ENCODE measurements at regions of chr11 and their contacts with region 1.

Region 1: GRCh38 chr11:86999859-87000753 is 37.6 kb upstream of the TMEM135 start:
- DNase-seq: peak; percentile 98
- H3K4me3 ChIP-seq: no peak overlapping the region
- H3K4me3 Mint-ChIP-seq: peak overlapping the region; percentile 58
- H3K27ac Mint-ChIP-seq: peak overlapping the region; percentile 94
- H3K4me1 ChIP-seq: peaks cover 59% of the 10 kb centered on the region
- H3K4me1 Mint-ChIP-seq: peaks cover 72% of the 10 kb centered on the region
- H3K27me3 ChIP-seq: no peaks in the 10 kb centered on the region
- H3K27me3 Mint-ChIP-seq: no peaks in the 10 kb centered on the region
- CTCF ChIP-seq: no peak

Region 2: DNA sequence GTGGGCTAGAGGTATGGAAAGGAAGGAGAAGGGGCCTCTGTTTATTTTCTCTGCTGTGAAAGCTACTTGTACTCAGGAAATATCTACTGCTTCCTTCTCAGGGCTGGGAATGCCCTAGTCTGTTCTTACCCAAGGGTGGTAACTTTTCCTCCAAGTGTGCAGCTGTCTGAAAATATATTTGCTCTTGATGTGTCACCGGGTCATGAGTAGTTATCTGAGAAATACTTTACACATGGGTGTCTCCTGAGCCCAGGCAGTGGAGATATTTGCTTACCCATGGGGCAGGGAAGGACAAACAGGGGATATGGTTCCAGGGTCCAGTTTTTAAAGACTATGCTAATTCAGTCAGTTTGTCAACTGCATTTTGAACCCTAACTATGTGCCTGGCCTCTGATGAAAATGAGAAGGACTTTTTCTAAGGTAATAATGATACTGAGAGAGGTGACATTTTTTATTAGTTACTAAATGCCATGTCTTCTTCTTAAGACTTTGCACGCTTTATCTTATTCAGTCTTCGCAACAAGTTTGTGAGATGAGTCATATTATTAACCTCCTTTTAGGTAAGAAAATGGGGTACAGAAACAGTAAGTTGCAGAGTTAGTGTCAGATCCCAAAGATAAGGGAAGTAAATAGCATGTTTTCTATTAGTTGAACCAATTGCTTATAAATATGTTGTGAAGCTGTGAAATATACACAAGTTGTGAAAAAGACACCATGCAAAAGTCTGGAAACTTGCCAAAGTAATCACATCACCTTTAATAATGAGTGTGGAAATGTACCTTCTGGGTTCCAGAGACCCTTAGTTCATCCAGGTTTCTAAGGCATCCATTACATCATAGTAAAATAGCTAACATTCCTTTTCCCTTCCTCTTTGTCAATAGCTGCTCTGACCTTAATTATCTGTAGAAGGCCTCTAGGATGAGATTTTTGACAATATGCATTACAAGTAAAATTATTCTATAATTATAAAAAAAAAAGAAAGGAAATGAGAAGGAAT is 1212.0 kb before region 1 on chr11:
- CTCF ChIA-PET with region 1: no interaction called
- POLR2A ChIA-PET with region 1: no interaction called
- intact Hi-C with region 1: loop called (anchors 10 kb)
- DNase-seq: peak; percentile 79 to 91
- H3K4me3 ChIP-seq: no peak overlapping the region
- H3K4me3 Mint-ChIP-seq: peak overlapping the region; percentile 61
- H3K27ac Mint-ChIP-seq: peak overlapping the region; percentile 86
- H3K4me1 ChIP-seq: peaks cover 69% of the 10 kb centered on the region
- H3K4me1 Mint-ChIP-seq: peaks cover 62% of the 10 kb centered on the region
- H3K27me3 ChIP-seq: no peaks in the 10 kb centered on the region
- H3K27me3 Mint-ChIP-seq: no peaks in the 10 kb centered on the region
- CTCF ChIP-seq: no peak

Region 3: GRCh38 chr11:86795890-86796289 is 204.2 kb before region 1 on chr11:
- CTCF ChIA-PET with region 1: no interaction called
- POLR2A ChIA-PET with region 1: no interaction called
- intact Hi-C with region 1: no loop called
- DNase-seq: peak; percentile 77 to 81
- H3K4me3 ChIP-seq: no peak overlapping the region
- H3K4me3 Mint-ChIP-seq: peak overlapping the region; percentile 10
- H3K27ac Mint-ChIP-seq: peak overlapping the region; percentile 99
- H3K4me1 ChIP-seq: peaks cover 80% of the 10 kb centered on the region
- H3K4me1 Mint-ChIP-seq: peaks cover 69% of the 10 kb centered on the region
- H3K27me3 ChIP-seq: no peaks in the 10 kb centered on the region
- H3K27me3 Mint-ChIP-seq: no peaks in the 10 kb centered on the region
- CTCF ChIP-seq: no peak

Region 4: DNA sequence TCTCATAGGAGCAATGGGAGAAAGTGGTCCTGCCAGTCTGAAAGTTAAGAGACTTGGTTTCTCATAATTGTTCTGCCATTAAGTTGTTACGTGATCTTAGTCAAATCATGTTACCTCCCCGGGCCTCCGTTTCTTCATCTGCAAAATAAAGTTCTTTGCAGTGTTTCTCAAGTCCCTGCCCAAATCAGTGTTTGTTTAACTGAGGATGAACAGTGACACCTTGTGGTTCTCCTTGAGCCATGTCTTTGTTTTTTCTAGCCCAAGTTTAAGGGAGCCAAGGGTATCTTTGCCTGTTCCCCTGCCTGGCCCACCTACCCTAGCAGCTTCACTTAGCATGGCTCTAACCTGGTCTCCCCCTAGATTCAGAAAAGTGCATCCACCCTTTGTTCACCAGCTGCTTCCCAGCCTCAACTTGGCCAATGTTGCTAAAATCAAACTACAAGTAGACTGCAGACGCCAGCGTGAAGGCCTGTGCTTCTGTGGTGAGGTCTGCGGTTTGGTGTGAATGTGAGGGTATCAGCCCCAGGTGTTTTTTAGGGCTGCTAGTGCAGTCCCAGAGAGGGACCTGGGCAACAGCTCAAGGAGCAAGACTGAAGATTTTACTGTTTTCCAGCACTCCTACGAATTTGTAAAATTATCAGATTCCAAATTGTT is 80.4 kb before region 1 on chr11:
- CTCF ChIA-PET with region 1: no interaction called
- POLR2A ChIA-PET with region 1: no interaction called
- intact Hi-C with region 1: loop called (anchors 1 kb)
- DNase-seq: peak; percentile 60 to 77
- H3K4me3 ChIP-seq: no peak overlapping the region
- H3K4me3 Mint-ChIP-seq: no peak overlapping the region
- H3K27ac Mint-ChIP-seq: no peak overlapping the region
- H3K4me1 ChIP-seq: peaks cover 32% of the 10 kb centered on the region
- H3K4me1 Mint-ChIP-seq: peaks cover 30% of the 10 kb centered on the region
- H3K27me3 ChIP-seq: no peaks in the 10 kb centered on the region
- H3K27me3 Mint-ChIP-seq: no peaks in the 10 kb centered on the region
- CTCF ChIP-seq: peak; percentile 91 to 95

Region 5: GRCh38 chr11:86955361-86956120 is 44.6 kb before region 1 on chr11 and contains the start of gene FZD4:
- CTCF ChIA-PET with region 1: interaction called, 32 read pairs
- POLR2A ChIA-PET with region 1: interaction called, 15 read pairs
- intact Hi-C with region 1: loop called (anchors 1 kb)
- DNase-seq: peak; percentile 96 to 99
- H3K4me3 ChIP-seq: peak within 1 kb of the TSS; percentile 94
- H3K4me3 Mint-ChIP-seq: peak within 1 kb of the TSS; percentile 93
- H3K27ac Mint-ChIP-seq: peak within 1 kb of the TSS; percentile 90
- H3K4me1 ChIP-seq: peaks cover 15% of the 10 kb centered on the region
- H3K4me1 Mint-ChIP-seq: peaks cover 22% of the 10 kb centered on the region
- H3K27me3 ChIP-seq: no peaks in the 10 kb centered on the region
- H3K27me3 Mint-ChIP-seq: no peaks in the 10 kb centered on the region
- CTCF ChIP-seq: peak; percentile 5 to 64
- total RNA-seq, gene FZD4: 60.6 and 78.4 TPM in 2 replicates

Region 6: DNA sequence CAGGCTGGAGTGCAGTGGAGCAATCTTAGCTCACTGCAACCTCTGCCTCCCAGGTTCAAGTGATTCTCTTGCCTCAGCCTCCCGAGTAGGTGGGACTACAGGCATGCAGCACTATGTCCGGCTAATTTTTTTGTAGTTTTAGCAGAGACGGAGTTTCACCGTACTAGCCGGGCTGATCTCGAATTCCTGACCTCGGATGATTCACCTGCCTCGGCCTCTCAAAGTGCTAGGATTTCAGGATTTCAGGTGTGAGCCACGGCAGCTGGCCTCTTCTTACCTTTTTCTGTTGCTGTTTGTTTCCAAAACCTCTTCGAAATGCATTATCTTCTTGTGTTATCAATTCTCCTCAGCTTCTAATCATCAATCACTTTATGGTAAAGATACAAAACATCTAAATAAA is 15.5 kb after region 1 on chr11:
- CTCF ChIA-PET with region 1: interaction called, 3 read pairs
- POLR2A ChIA-PET with region 1: no interaction called
- intact Hi-C with region 1: loop called (anchors 1 kb)
- DNase-seq: no peak
- H3K4me3 ChIP-seq: no peak overlapping the region
- H3K4me3 Mint-ChIP-seq: no peak overlapping the region
- H3K27ac Mint-ChIP-seq: no peak overlapping the region
- H3K4me1 ChIP-seq: peaks cover 15% of the 10 kb centered on the region
- H3K4me1 Mint-ChIP-seq: peaks cover 27% of the 10 kb centered on the region
- H3K27me3 ChIP-seq: no peaks in the 10 kb centered on the region
- H3K27me3 Mint-ChIP-seq: no peaks in the 10 kb centered on the region
- CTCF ChIP-seq: no peak

Region 7: DNA sequence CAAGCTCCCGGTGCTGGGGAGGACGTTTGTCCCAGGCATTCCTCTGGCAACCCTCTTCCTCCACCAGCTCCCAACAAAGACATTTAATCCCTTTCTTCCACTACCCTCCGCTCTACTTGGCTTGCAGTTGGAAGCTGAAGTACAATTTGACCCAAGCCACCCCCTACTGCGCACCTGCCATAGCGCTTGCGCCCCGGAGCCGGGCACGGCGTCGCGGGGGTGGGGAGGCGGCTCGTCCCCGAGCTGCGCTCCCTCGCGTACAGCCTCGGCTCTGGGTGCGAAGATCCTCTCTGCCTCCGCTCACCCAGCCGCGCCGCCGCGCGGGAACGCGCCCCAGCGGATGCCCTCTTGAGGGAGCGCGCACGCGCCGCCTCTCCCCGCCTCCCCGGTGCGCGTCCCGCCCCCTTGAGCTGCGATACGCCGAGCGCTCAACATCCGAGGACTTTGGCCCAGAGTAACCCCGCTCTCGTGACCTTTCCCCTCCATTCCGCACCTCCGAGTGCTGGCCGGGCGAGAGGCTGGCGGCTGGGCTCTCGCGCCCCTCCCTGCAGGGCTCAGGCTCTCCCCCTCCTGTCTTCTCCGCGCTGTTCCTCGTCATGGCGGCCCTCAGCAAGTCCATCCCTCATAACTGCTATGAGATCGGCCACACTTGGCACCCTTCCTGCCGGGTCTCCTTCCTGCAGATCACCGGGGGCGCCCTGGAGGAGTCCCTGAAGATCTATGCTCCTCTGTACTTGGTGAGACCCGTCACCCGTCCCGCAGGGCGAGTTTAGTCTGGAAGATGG is 37.5 kb after region 1 on chr11 and contains the start of gene TMEM135:
- CTCF ChIA-PET with region 1: interaction called, 20 read pairs
- POLR2A ChIA-PET with region 1: interaction called, 33 read pairs
- intact Hi-C with region 1: loop called (anchors 2 kb)
- DNase-seq: peak; percentile 99 to 100
- H3K4me3 ChIP-seq: peak within 1 kb of the TSS; percentile 83
- H3K4me3 Mint-ChIP-seq: peak within 1 kb of the TSS; percentile 97
- H3K27ac Mint-ChIP-seq: peak within 1 kb of the TSS; percentile 81
- H3K4me1 ChIP-seq: peaks cover 11% of the 10 kb centered on the region
- H3K4me1 Mint-ChIP-seq: peaks cover 59% of the 10 kb centered on the region
- H3K27me3 ChIP-seq: no peaks in the 10 kb centered on the region
- H3K27me3 Mint-ChIP-seq: no peaks in the 10 kb centered on the region
- CTCF ChIP-seq: peak in 1 of 2 experiments; percentile 62
- total RNA-seq, gene TMEM135: 88.6 and 95.2 TPM in 2 replicates

Region 8: DNA sequence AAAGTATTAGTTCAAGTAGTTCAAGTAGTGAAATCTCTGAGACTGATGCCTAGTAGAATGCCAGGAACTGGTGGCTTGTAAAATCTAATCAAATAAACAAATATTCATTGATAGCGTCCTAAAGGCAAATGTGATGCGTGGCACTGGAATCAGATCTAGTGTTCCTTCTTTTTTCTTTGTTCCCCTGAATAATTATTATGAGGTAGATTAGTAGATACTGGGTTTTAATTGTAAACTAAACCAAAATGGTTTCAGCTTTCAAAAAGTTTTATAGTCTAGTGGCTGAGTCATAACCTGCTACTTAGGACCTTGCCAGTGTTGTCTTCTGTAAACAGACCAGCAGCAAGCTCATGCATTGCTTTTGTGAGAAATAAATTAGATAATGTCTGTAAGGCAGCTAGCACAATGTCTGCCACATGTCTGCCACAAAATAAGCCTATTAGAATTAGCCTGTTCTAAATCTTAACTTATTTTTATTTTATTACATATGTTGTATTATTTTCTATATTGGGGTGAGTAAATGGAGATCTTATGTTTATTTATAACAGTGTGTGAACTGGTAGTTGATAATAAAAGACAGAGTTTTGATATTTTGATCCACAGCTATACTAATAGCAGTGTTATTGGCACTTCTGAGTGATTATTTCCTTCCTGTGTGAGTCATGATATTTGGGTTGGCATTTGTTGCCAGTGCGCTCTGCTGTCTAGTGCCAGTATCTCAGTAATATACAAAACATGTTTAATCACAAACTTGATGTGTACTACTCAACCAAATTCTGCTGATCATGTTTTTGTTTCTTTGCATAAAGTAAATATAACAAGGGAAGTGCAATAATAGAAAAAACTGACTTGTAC is 173.3 kb after region 1 on chr11:
- CTCF ChIA-PET with region 1: no interaction called
- POLR2A ChIA-PET with region 1: interaction called, 10 read pairs
- intact Hi-C with region 1: no loop called
- DNase-seq: no peak
- H3K4me3 ChIP-seq: no peak overlapping the region
- H3K4me3 Mint-ChIP-seq: no peak overlapping the region
- H3K27ac Mint-ChIP-seq: no peak overlapping the region
- H3K4me1 ChIP-seq: peaks cover 6% of the 10 kb centered on the region
- H3K4me1 Mint-ChIP-seq: peaks cover 19% of the 10 kb centered on the region
- H3K27me3 ChIP-seq: no peaks in the 10 kb centered on the region
- H3K27me3 Mint-ChIP-seq: no peaks in the 10 kb centered on the region
- CTCF ChIP-seq: no peak

Measured in Caco-2 (cell line).